Psoas muscle (tissue), 8 donors: ENCODE measurements at regions of chr1 and their contacts with region 1.

Region 1: DNA sequence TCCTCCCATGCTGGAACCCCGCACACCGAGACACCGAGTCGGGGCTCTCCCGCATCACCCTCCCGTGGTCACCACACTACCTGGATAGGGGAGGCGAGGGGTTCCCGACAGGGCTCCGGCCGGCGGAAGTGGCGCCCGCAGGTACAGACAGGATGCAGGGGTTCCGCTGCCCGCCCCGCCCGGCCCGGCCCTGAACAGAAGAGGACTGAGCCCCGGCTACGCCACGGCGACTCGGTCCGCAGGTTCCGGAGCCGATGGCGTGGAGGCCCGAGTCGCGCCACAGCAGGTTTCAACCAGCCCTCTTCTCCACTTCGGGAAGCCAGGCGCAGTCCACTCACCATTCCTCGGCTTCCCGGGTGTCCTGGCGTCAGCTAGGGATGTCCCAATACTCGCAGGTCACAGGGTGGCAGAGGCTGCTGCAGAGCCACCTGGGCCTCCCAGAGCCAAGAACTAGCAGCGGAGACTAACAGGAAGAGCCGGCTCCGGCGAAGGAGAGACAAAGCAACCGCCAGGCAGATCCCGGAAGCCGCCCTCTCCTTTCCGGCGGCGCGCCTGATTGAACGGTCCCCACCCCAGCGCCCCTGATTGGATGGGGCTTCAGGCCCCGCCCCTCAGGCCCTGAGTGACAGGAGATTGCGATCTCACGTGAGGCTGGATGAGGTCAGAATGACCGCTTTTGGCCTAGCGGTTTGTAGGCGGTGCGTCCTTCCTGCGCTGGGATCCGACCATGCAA is at the start of gene ZNF669:
- DNase-seq: peak; percentile 98
- ATAC-seq: peak; percentile 100
- H3K4me3 ChIP-seq: peak within 1 kb of the TSS; percentile 83
- H3K27ac ChIP-seq: peak within 1 kb of the TSS; percentile 86
- H3K4me1 ChIP-seq: peaks cover 5% of the 10 kb centered on the region
- H3K27me3 ChIP-seq: no peaks in the 10 kb centered on the region
- CTCF ChIP-seq: no peak
- total RNA-seq, gene ZNF669: 1.3 to 3.0 (median 2.6) TPM

Region 2: GRCh38 chr1:246659594-246660140 is 444.4 kb before region 1 on chr1:
- intact Hi-C with region 1: no loop called
- DNase-seq: no peak
- ATAC-seq: no peak
- H3K4me3 ChIP-seq: no peak overlapping the region
- H3K27ac ChIP-seq: no peak overlapping the region
- H3K4me1 ChIP-seq: no peaks in the 10 kb centered on the region
- H3K27me3 ChIP-seq: no peaks in the 10 kb centered on the region
- CTCF ChIP-seq: no peak

Region 3: DNA sequence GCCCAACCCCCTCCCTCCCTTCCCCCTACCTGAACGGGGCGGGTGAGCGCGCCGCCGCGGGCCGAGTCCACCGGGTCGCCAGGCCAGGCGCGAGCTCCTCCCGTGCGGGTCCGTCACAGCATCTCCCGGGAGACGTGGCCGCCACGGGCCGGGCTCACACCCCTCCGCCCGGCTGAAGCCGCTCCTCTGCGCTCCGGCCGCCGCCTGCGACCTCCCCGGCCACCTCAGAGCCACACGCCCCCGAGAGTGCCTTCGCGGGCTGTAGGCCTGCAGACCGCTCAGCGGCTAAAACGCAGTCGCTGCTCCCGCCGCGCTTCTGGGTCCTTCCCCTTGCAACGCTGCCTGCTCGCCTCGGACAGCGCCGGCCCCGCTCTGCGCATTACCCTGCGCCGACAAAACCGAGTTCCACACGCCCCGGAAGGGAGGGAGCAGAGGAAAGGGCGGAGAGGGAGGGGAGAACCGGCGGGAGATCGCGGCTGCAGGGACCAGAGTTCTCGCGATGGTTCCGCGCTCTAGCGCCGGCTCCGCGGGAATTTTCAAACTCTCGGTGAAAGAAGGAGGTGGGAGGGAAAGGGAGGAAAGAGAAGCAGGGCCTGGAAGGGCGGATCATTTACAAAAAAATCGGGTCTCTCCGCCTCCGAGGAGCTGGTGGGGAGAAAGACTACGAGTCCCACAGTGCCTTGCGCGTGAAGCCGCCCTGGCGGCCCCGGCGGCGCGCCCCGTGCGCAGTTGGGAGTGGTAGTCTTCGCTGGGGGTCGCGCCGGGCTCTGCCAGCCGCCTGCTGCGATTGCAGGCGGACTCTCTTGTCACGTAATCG is 172.3 kb before region 1 on chr1 and contains the start of gene AHCTF1:
- intact Hi-C with region 1: loop called in 1 of 2 experiments (anchors 10 kb)
- DNase-seq: peak; percentile 95 to 98
- ATAC-seq: peak; percentile 97 to 98 (median 98)
- H3K4me3 ChIP-seq: peak within 1 kb of the TSS; percentile 98
- H3K27ac ChIP-seq: peak within 1 kb of the TSS; percentile 98
- H3K4me1 ChIP-seq: peaks cover 20% of the 10 kb centered on the region
- H3K27me3 ChIP-seq: no peaks in the 10 kb centered on the region
- CTCF ChIP-seq: no peak
- total RNA-seq, gene AHCTF1: 16.8 to 29.6 (median 25.3) TPM

Region 4: DNA sequence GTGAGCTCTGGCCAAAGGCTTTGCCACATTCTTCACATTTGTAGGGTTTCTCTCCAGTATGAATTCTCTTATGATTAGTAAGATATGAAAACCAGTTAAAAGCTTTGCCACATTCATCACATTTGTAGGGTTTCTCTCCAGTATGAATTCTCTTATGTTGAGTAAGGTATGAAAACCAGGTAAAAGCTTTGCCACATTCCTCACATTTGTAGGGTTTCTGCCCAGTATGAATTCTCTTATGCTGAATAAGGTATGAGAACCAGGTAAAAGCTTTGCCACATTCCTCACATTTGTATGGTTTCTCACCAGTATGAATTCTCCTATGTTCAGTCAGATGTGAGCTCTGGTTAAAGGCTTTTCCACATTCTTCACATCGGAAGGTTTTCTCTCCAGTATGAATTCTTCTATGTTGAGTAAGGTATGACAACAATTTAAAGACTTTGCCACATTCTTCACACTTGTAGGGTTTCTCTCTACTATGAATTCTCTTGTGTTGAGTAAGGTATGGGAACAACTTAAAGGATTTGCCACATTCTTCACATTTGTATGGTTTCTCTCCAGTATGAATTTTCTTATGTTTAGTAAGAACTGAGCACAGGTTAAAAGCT is 116.8 kb before region 1 on chr1:
- intact Hi-C with region 1: no loop called
- DNase-seq: no peak
- ATAC-seq: no peak
- H3K4me3 ChIP-seq: no peak overlapping the region
- H3K27ac ChIP-seq: no peak overlapping the region
- H3K4me1 ChIP-seq: no peaks in the 10 kb centered on the region
- H3K27me3 ChIP-seq: no peaks in the 10 kb centered on the region
- CTCF ChIP-seq: no peak

Region 5: DNA sequence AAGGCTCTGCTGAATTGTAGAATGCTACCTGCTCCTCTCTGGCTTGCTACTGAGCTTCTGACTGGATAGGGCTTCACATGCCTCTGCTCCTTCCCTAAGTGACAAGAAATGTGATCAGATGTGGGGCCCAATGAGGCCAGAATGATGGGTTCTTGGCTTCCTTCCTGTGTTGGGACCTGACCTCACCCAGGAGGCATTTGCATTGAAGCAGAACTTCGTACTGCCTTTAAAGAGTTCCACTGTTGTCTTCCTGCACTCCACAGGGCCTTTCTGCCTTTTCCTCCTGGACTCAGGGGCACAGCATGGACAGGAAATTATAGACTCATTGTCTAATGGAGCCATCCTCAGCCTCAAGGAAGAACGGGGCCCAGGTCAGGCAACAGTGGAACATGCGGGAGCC is 39.7 kb before region 1 on chr1:
- intact Hi-C with region 1: no loop called
- DNase-seq: no peak
- ATAC-seq: no peak
- H3K4me3 ChIP-seq: no peak overlapping the region
- H3K27ac ChIP-seq: no peak overlapping the region
- H3K4me1 ChIP-seq: no peaks in the 10 kb centered on the region
- H3K27me3 ChIP-seq: no peaks in the 10 kb centered on the region
- CTCF ChIP-seq: no peak

Region 6: DNA sequence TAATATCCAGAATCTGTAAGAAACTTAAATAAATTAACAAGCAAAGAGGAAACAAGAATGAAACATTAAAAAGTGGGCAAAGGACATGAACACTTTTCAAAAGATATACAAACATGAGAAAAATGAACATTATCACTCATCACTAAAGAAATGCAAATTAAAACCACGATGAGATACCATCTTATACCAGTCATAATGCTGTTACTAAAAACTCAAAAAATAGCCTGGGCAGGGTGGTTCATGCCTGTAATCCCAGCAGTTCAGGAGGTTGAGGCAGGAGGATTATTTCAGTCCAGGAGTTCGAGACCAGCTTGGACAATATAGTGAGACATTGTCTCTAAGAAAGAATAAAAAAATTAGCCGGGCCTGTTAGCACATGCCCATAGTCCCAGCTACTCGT is 61.6 kb after region 1 on chr1:
- intact Hi-C with region 1: loop called in 1 of 2 experiments (anchors 10 kb)
- DNase-seq: no peak
- ATAC-seq: no peak
- H3K4me3 ChIP-seq: no peak overlapping the region
- H3K27ac ChIP-seq: no peak overlapping the region
- H3K4me1 ChIP-seq: no peaks in the 10 kb centered on the region
- H3K27me3 ChIP-seq: no peaks in the 10 kb centered on the region
- CTCF ChIP-seq: no peak

Region 7: GRCh38 chr1:247210376-247211117 is 106.5 kb after region 1 on chr1:
- intact Hi-C with region 1: loop called in 1 of 2 experiments (anchors 5 kb)
- DNase-seq: peak; percentile 98 to 99
- ATAC-seq: peak; percentile 100
- H3K4me3 ChIP-seq: peak overlapping the region; percentile 96
- H3K27ac ChIP-seq: peak overlapping the region; percentile 87
- H3K4me1 ChIP-seq: peaks cover 15% of the 10 kb centered on the region
- H3K27me3 ChIP-seq: no peaks in the 10 kb centered on the region
- CTCF ChIP-seq: no peak

Region 8: GRCh38 chr1:247331172-247331991 is 227.4 kb after region 1 on chr1 and contains the start of gene ZNF496:
- intact Hi-C with region 1: loop called in 1 of 2 experiments (anchors 10 kb)
- DNase-seq: peak; percentile 87 to 95
- ATAC-seq: peak; percentile 92 to 95 (median 94)
- H3K4me3 ChIP-seq: peak within 1 kb of the TSS; percentile 99
- H3K27ac ChIP-seq: peak within 1 kb of the TSS; percentile 95
- H3K4me1 ChIP-seq: peaks cover 40% of the 10 kb centered on the region
- H3K27me3 ChIP-seq: no peaks in the 10 kb centered on the region
- CTCF ChIP-seq: no peak
- total RNA-seq, gene ZNF496: 19.5 to 24.2 (median 22.9) TPM